ENCODE measurements at regions of chr6 and their contacts with region 1.

Region 1: DNA sequence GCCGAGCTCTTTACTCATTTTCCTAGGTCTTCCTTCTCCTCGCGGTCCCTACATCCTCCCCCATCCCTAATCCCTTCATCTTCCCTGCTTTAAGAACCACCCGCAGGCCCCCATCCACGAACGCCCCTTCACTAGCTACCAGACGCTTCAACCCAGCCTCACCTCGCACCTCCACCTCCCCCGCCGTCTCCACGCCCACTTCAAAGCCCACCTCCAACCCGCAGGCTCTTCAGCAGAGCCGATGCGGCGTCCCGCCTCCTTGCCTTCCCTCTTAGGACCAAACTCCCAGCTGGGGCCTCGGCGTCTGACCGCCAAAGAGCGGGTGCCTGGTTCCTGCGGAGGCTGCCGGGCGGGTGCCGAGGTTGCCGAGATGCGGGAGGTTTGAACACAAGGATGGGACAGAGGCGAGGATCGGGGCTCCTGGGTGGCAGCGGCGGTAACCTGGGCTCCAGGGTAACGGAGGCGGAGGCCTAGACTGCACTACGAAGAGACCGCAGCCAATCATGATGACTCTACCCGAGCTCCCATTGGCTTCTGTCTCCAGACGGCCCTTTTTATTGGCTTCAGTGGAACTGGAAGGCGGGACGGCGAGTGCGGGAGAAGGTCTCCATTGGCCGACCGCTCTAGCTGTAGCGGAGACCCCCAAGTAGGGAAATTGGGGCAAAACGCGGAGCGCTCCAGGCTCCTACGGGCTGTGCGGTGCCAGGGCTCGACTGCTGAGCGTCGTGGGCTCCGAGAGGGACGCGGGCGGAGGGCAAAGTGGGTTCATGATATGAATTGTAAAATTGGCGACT is at the start of gene LCA5:
- DNase-seq: peak; percentile 88 to 90
- H3K4me3 ChIP-seq: peak within 1 kb of the TSS; percentile 82
- H3K27ac ChIP-seq: peak within 1 kb of the TSS; percentile 52
- H3K4me1 ChIP-seq: no peaks in the 10 kb centered on the region
- H3K27me3 ChIP-seq: no peaks in the 10 kb centered on the region
- CTCF ChIP-seq: no peak
- total RNA-seq, gene LCA5: 4.8 and 5.4 TPM in 2 replicates

Region 2: DNA sequence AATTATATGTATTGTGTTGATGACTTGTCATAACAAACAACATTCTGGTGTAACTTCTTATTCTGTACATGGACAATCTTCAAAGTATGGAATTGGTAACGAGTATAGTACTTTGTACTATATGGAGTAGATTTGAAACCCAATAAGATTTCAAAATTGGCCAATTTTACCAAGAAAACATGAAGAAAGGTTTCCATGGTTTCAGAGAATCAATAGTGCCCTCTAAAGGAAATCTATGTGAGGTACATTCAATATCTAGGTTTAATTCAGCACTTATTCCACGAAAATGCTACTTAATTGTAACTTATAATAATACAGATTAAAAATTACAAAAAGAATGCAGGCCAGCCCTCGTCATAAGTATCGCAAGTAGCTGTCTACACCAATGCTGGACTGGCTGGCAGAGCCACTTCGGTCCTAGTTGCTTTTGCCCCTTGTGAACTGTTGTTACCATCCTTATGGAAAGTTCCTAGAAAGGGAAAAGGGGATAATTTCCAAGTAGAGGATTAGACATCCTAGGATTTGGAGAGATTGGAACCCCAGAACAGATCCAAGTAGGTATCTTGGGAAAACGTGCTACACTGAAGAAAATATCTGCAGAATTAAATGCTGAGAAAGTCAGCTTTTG is 70.8 kb before region 1 on chr6:
- CTCF ChIA-PET with region 1: no interaction called
- POLR2A ChIA-PET with region 1: no interaction called
- intact Hi-C with region 1: loop called (anchors 5 kb)
- DNase-seq: no peak
- H3K4me3 ChIP-seq: no peak overlapping the region
- H3K27ac ChIP-seq: no peak overlapping the region
- H3K4me1 ChIP-seq: peaks cover 18% of the 10 kb centered on the region
- H3K27me3 ChIP-seq: no peaks in the 10 kb centered on the region
- CTCF ChIP-seq: peak; percentile 71

Region 3: DNA sequence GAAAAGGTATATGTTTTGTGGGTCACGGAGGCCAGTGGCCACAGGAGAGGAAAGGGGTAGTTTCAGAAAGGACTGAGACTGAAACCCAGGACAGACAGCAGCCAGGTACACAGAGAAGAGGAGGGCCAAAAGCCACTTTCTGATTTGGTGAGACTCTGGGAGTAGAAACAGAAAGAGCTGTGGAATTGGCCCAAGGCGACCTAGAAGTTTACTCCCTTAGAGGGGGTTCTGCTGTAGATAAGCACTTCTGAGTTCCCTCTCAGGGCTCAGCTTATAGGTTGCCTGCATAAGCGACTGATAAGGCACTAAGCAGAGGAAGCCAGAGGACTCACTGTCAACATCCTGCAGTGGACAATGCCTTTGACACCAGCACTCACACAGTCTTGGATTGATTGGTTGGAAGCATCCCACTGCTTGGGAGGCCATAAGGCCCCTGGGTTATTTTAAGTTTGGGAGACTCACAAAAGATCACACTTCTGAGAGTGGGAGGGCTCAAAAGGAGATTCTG is 77.7 kb after region 1 on chr6:
- CTCF ChIA-PET with region 1: no interaction called
- POLR2A ChIA-PET with region 1: no interaction called
- intact Hi-C with region 1: loop called (anchors 5 kb)
- DNase-seq: no peak
- H3K4me3 ChIP-seq: no peak overlapping the region
- H3K27ac ChIP-seq: no peak overlapping the region
- H3K4me1 ChIP-seq: peaks cover 25% of the 10 kb centered on the region; the same call in 1 of the 2 replicates
- H3K27me3 ChIP-seq: no peaks in the 10 kb centered on the region
- CTCF ChIP-seq: no peak

Region 4: DNA sequence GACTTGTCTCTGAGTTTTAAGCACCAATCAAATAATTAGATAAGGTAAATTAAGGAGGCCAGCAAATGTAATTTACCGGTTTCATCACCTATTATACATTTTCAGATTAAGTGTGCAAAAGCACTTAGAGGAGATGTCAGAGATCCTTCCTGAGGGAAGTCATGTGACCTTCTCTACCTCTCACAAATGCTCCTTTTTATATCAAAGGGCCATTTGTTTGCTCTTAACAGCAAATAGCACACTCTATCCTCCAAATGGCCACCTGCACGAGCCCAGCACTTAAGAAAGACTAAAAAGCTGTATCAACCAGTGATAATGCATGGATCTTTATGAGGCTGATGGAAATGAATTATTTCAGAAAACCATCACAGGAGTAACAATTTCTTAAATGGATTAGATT is 260.8 kb after region 1 on chr6:
- CTCF ChIA-PET with region 1: no interaction called
- POLR2A ChIA-PET with region 1: no interaction called
- intact Hi-C with region 1: no loop called
- DNase-seq: no peak
- H3K4me3 ChIP-seq: no peak overlapping the region
- H3K27ac ChIP-seq: no peak overlapping the region
- H3K4me1 ChIP-seq: no peaks in the 10 kb centered on the region
- H3K27me3 ChIP-seq: no peaks in the 10 kb centered on the region
- CTCF ChIP-seq: no peak

Measured in PC-9 (cell line).